ENCODE measurements at regions of chr15 and their contacts with region 1.

Region 1: GRCh38 chr15:75809986-75810750 is 33.1 kb upstream of the UBE2Q2 start:
- DNase-seq: no peak
- H3K4me3 ChIP-seq: no peak overlapping the region
- CTCF ChIP-seq: peak; percentile 38

Region 2: GRCh38 chr15:75921729-75922703 is 111.8 kb after region 1 on chr15:
- CTCF ChIA-PET with region 1: interaction called, 23 read pairs
- POLR2A ChIA-PET with region 1: no interaction called
- DNase-seq: peak; percentile 37
- H3K4me3 ChIP-seq: no peak overlapping the region
- CTCF ChIP-seq: peak; percentile 35